Sigmoid colon (tissue), 7 donors: ENCODE measurements at regions of chr19 and their contacts with region 1.

Region 1: GRCh38 chr19:41998246-41999020 is 4.4 kb upstream of the ATP1A3 start:
- DNase-seq: no peak
- H3K4me3 ChIP-seq: peak overlapping the region in 2 of 4 donors; percentile 17 to 19
- H3K27ac ChIP-seq: no peak overlapping the region
- H3K4me1 ChIP-seq: peaks cover 0 to 35% (median 31%) of the 10 kb centered on the region in 4 donors
- H3K27me3 ChIP-seq: peaks cover 30 to 91% (median 64%) of the 10 kb centered on the region in 3 donors
- CTCF ChIP-seq: peak in 3 of 4 experiments; percentile 28 to 58 (median 57)
- EP300 ChIP-seq: no peak
- POLR2A ChIP-seq: no peak

Region 2: DNA sequence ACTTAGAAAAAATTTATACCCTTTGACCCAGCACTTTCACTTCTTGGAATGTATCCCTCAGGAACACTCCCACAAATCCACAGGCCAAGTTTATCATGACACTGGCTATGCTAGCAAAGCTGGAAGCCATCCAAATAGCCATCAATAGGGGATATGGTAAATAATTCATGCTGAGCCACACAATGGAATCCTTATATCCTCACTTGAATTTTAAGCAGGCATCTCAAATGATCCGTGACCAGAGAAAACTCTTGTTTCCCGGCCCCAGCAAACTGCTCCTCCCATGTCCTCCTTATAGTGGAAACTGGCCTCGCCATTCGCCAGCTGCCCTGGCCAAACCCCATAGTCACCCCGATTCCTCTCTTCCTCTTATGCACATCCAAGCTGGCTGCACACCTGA is 34.0 kb after region 1 on chr19:
- intact Hi-C with region 1: loop called (anchors 2 kb)
- DNase-seq: no peak
- H3K4me3 ChIP-seq: no peak overlapping the region
- H3K27ac ChIP-seq: peak overlapping the region in 2 of 4 donors; percentile 8 to 43
- H3K4me1 ChIP-seq: peaks cover 0 to 20% (median 15%) of the 10 kb centered on the region in 4 donors
- H3K27me3 ChIP-seq: no peaks in the 10 kb centered on the region
- CTCF ChIP-seq: no peak
- EP300 ChIP-seq: no peak
- POLR2A ChIP-seq: no peak